GM13977 (cell line): ENCODE measurements at regions of chr5 and their contacts with region 1.

Region 1: GRCh38 chr5:90264689-90265544 is 144.6 kb downstream of the CETN3 start:
- DNase-seq: peak; percentile 8
- CTCF ChIP-seq: peak; percentile 83

Region 2: GRCh38 chr5:88724201-88724600 is 1540.7 kb before region 1 on chr5:
- in situ Hi-C with region 1: loop called (anchors 25 kb)
- DNase-seq: no peak
- CTCF ChIP-seq: no peak

Region 3: DNA sequence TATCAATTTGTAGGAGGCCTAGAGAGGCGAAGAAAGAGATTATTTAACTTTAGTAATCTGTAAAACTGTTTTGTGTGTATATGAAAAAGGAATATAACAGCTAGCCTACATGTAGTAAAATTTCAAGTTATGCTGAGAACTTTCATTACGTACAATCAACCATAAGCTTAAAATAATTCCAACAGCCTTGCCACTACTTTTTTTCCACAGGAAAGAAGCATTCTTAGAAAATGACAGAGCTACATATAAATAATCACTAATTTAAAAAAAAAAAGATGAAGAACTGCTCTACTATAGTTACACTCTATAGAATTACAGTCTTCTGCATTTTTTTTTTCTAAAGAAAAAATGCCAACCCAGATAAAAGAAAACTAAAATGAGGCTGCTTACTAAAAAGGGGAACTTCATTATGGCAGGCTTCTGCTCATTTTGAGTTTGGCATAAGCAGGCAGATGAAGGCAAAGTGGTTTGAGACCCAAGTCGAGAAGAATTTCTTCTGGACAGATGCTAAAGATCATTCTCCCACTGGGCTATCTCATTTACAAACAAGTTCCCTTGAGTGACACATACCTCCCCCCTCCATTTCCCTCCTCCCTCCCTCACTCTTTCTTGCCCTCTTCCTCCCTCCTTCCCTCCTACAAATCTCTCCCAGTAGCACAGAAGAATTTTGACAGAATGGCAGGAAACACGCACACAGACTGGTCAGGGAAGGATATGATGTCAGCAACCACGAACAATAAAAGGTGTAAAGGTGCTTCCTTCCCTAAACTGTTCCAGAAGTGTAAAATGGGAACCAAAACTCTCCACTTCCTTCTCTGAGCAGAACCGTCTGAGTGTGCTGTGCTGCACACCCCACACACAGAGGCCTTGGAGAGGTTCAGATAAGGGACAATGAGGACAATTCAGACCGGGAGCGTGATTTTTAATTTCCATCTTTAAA is 1438.0 kb before region 1 on chr5:
- in situ Hi-C with region 1: loop called (anchors 25 kb)
- DNase-seq: no peak
- CTCF ChIP-seq: no peak